Gastrocnemius medialis (tissue), 4 donors: ENCODE measurements at regions of chr20 and their contacts with region 1.

Region 1: DNA sequence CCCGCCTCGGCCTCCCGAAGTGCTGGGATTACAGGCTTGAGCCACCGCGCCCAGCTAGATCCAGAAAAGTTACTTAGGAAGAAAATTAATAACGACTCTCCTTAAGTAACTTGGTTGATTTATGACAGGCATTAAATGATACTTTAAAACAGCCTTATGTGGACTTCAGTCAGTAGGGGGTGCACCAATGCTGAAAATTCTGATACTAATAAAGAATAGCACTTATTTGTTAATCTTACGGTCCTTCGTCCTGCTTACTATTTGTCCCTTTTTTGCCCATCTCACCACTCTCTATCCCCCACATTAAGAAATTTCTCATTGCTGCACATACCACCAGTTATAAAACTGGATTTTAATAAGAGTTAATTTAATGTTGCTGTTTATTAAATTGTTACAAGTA is 12.7 kb upstream of the PRELID3B start:
- DNase-seq: no peak
- ATAC-seq: no peak
- H3K4me3 ChIP-seq: no peak overlapping the region
- H3K27ac ChIP-seq: no peak overlapping the region
- H3K4me1 ChIP-seq: no peaks in the 10 kb centered on the region
- H3K27me3 ChIP-seq: no peaks in the 10 kb centered on the region
- CTCF ChIP-seq: no peak
- POLR2A ChIP-seq: no peak

Region 2: GRCh38 chr20:59006864-59007664 is 48.2 kb before region 1 on chr20 and contains the start of gene CTSZ:
- in situ Hi-C with region 1: no loop called
- intact Hi-C with region 1: no loop called
- DNase-seq: peak in 1 of 2 donors; percentile 37
- ATAC-seq: peak; percentile 72 to 79
- H3K4me3 ChIP-seq: peak within 1 kb of the TSS; percentile 65 to 78 (median 76)
- H3K27ac ChIP-seq: peak within 1 kb of the TSS; percentile 68 to 82 (median 78)
- H3K4me1 ChIP-seq: peaks cover 16 to 27% of the 10 kb centered on the region in 2 donors
- H3K27me3 ChIP-seq: no peaks in the 10 kb centered on the region
- CTCF ChIP-seq: no peak
- POLR2A ChIP-seq: peak in 1 of 2 donors; percentile 56
- total RNA-seq, gene CTSZ: 25.2 to 58.7 (median 51.9) TPM

Region 3: DNA sequence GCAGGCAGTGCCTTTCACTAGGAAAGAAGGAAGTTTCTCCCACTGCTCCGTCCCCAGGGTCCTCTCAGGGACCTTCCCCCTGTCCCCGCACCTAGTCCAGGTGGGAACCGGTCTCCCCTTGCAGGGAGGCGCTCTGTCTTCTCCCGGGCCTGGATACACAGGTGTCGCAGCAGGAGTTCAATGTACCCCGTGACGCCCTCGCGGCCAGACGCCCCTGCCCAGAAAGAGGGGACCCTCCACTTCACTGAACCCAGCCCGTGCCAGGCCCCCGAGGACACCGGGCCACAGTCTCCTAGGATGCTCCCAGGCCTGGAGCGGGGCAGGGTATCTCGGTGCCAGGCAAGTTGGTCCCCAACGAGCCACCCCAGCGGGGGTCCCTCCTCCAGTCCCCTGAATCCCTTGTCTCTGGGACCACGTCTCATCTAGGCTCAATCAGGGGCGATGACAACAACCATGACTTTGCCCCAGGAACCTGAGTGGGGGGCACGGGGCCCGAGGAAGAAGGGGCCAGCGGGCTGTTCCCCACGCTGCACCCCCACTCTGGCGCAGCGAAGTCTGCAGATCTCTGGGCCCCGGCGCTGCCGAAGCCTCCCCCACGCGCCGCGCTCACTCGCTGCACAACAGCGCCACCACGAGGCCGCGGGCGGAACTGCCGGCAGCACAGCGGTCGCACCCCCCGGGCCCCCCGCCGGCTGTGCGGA is 348.1 kb after region 1 on chr20:
- in situ Hi-C with region 1: loop called in 1 of 4 experiments (anchors 25 kb)
- intact Hi-C with region 1: no loop called
- DNase-seq: no peak
- ATAC-seq: no peak
- H3K4me3 ChIP-seq: peak overlapping the region in 1 of 4 donors; percentile 24
- H3K27ac ChIP-seq: no peak overlapping the region
- H3K4me1 ChIP-seq: peaks cover 0 to 5% of the 10 kb centered on the region in 2 donors
- H3K27me3 ChIP-seq: peaks cover 42 to 60% (median 48%) of the 10 kb centered on the region in 3 donors
- CTCF ChIP-seq: peak; percentile 66 to 85 (median 68)
- POLR2A ChIP-seq: no peak

Region 4: DNA sequence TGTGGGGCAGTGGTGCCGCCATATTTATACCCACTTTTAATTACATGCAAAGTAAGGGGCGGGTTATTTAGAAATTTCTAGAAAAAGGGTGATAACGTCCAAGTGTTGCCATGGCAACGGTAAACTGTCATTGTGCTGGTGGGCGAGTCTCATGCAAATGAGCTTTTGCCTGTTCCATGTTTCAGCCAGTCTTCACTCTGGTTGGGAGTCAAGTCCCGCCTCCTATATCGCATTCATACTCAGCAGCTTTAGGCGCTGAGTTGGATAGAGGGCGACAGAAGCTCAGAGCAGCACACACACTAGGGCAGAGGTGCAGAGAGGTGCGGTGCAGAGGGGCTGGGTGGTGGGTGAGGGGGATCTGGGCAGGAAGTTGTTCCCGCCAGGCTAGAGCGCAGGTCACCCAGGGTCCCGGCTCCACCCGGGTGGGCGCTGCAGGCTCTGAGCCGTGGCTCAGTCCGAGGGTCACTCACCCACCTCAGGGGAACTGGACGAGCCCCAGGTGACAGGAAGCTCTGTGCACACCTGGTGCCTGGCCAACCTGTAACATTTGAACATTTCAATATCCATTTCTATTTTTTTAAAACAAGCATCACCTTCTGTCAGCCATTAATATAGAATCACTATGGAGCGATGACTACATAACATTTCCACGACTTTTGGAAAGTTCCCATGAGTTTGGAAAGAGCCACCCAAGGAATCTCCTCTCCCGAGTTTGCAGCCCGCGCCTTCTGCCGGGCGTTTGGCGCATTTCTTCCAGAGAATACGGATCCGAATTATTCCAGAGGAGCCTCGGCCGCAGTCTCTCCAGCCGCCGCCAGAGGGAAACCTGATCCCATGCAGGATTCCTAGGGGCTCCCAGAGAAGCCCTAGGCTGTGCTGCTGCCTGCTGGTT is 460.0 kb after region 1 on chr20:
- in situ Hi-C with region 1: no loop called
- intact Hi-C with region 1: no loop called
- DNase-seq: no peak
- ATAC-seq: no peak
- H3K4me3 ChIP-seq: no peak overlapping the region
- H3K27ac ChIP-seq: no peak overlapping the region
- H3K4me1 ChIP-seq: no peaks in the 10 kb centered on the region
- H3K27me3 ChIP-seq: peaks cover 8 to 16% (median 12%) of the 10 kb centered on the region in 3 donors
- CTCF ChIP-seq: peak; percentile 34 to 62 (median 51)
- POLR2A ChIP-seq: no peak